WTC11 (cell line): ENCODE measurements at regions of chr20 and their contacts with region 1.

Region 1: GRCh38 chr20:47348539-47349142 is 7.9 kb downstream of the ZMYND8 start:
- DNase-seq: no peak
- ATAC-seq: peak; percentile 16
- H3K4me3 Mint-ChIP-seq: no peak overlapping the region
- H3K27ac Mint-ChIP-seq: no peak overlapping the region
- H3K4me1 Mint-ChIP-seq: peaks cover 9% of the 10 kb centered on the region
- H3K27me3 Mint-ChIP-seq: no peaks in the 10 kb centered on the region
- CTCF ChIP-seq: no peak

Region 2: GRCh38 chr20:47317127-47317895 is 31.3 kb before region 1 on chr20:
- CTCF ChIA-PET with region 1: interaction called, 3 read pairs
- POLR2A ChIA-PET with region 1: interaction called, 140 read pairs
- DNase-seq: peak; percentile 26
- ATAC-seq: peak; percentile 1; the same call in 1 of the 2 replicates
- H3K4me3 Mint-ChIP-seq: peak overlapping the region; percentile 59
- H3K27ac Mint-ChIP-seq: peak overlapping the region; percentile 100
- H3K4me1 Mint-ChIP-seq: peaks cover 89% of the 10 kb centered on the region
- H3K27me3 Mint-ChIP-seq: no peaks in the 10 kb centered on the region
- CTCF ChIP-seq: no peak